ENCODE measurements at regions of chr17 and their contacts with region 1.

Region 1: DNA sequence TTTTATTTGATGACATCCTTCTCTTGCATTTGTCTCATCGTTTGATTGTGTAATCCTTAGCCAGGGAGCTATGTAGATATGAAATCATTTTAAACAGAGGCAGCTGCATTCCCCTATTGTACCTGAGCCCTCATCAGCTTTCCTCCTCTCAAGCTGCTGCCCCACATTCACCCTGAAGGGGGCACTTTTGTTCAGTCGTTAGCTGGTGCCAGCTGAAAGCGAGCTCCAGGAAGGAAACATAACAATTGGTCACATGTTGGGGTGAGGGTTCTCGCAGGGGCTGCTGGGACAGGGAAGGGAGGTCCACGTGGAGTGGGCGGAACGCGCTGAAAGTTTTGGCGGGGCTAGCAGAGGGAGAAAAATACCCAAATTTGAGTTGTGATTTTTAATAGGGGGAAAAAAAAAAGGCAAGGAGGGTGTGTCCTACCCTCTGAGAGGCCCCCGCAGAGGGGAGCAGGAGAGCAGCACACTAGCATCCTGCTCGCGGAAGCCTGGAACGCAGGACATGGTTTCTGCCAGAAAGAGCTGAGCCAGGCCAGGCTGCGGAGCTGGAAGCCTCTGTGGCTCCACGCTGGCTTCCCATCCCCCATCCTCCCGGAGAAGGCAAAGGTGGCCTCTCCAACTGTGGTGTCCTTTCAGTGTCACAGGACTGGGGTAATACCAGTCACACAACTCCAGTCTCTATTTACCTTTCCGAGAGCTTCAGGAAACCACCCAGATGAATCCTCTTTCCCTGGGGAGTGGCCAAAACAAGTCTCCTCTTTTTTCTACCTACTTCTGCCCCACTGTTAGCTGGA is 8.5 kb upstream of the MSL1 start:
- DNase-seq: peak; percentile 94
- ATAC-seq: peak; percentile 86
- H3K4me3 ChIP-seq: peak overlapping the region in 4 of 5 experiments; percentile 36 to 62 (median 58)
- H3K4me3 Mint-ChIP-seq: peak overlapping the region; percentile 92
- H3K27ac ChIP-seq: peak overlapping the region; percentile 28 to 40
- H3K27ac Mint-ChIP-seq: peak overlapping the region; percentile 89
- H3K4me1 ChIP-seq: peaks cover 34 to 41% of the 10 kb centered on the region in 2 donors
- H3K4me1 Mint-ChIP-seq: peaks cover 43% of the 10 kb centered on the region
- H3K27me3 ChIP-seq: no peaks in the 10 kb centered on the region
- H3K27me3 Mint-ChIP-seq: no peaks in the 10 kb centered on the region
- CTCF ChIP-seq: peak; percentile 84

Region 2: DNA sequence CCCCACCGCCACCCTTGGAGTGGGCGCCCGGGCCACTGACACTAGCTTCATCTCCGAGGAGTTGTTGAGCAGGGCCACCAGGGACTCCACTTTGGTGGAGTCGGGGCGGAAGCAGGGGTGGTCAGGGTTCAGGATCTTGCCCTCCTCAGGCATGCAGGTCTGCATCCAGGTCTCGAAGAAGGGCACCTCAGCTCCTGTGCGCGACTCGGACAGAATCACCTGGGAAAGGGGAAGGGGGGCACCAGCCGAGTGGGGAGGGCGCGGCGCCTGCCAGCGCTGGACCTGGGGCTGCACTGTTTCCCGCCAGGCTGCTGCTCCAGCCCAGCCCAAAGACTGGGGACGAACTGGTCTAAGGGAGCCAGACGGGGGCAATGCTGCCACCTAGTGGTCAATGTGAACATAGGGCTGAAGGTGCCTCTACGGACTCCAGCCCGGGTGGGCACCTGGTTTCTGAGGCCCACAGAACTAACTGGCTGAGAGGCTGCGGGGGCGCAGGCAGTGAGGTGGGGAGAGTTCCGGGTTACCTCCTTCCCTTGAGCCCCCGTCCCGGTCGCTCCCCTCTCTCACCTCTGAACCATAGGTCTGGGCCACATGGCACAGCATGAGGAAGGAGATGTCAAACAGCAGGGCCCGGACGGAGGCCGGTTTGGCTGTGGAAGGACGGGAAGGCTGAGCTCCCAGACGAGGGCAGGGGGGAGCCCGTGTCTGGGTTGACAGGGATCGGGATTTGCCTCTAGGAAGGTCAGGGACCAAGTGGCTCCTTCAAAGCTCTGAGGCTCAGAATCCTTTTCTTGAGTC is 86.3 kb before region 1 on chr17:
- CTCF ChIA-PET with region 1: interaction called, 22 read pairs
- POLR2A ChIA-PET with region 1: no interaction called
- intact Hi-C with region 1: no loop called
- DNase-seq: peak; percentile 85
- ATAC-seq: peak; percentile 92
- H3K4me3 ChIP-seq: no peak overlapping the region
- H3K4me3 Mint-ChIP-seq: no peak overlapping the region
- H3K27ac ChIP-seq: no peak overlapping the region
- H3K27ac Mint-ChIP-seq: no peak overlapping the region
- H3K4me1 ChIP-seq: peaks cover 0 to 5% of the 10 kb centered on the region in 2 donors
- H3K4me1 Mint-ChIP-seq: peaks cover 4% of the 10 kb centered on the region
- H3K27me3 ChIP-seq: no peaks in the 10 kb centered on the region
- H3K27me3 Mint-ChIP-seq: no peaks in the 10 kb centered on the region
- CTCF ChIP-seq: peak; percentile 94

Region 3: GRCh38 chr17:40075201-40075941 is 37.9 kb before region 1 on chr17:
- CTCF ChIA-PET with region 1: interaction called, 128 read pairs
- POLR2A ChIA-PET with region 1: no interaction called
- intact Hi-C with region 1: loop called (anchors 5 kb)
- DNase-seq: peak; percentile 82
- ATAC-seq: peak; percentile 93
- H3K4me3 ChIP-seq: no peak overlapping the region
- H3K4me3 Mint-ChIP-seq: no peak overlapping the region
- H3K27ac ChIP-seq: no peak overlapping the region
- H3K27ac Mint-ChIP-seq: peak overlapping the region; percentile 46
- H3K4me1 ChIP-seq: peaks cover 28 to 31% of the 10 kb centered on the region in 2 donors
- H3K4me1 Mint-ChIP-seq: peaks cover 40% of the 10 kb centered on the region
- H3K27me3 ChIP-seq: no peaks in the 10 kb centered on the region
- H3K27me3 Mint-ChIP-seq: no peaks in the 10 kb centered on the region
- CTCF ChIP-seq: peak; percentile 88

Region 4: GRCh38 chr17:40139566-40140058 is 26.3 kb after region 1 on chr17:
- CTCF ChIA-PET with region 1: interaction called, 26 read pairs
- POLR2A ChIA-PET with region 1: interaction called, 20 read pairs
- intact Hi-C with region 1: loop called (anchors 1 kb)
- DNase-seq: no peak
- ATAC-seq: peak; percentile 1
- H3K4me3 ChIP-seq: peak overlapping the region; percentile 74 to 93 (median 84)
- H3K4me3 Mint-ChIP-seq: peak overlapping the region; percentile 94
- H3K27ac ChIP-seq: peak overlapping the region; percentile 94 to 95
- H3K27ac Mint-ChIP-seq: peak overlapping the region; percentile 98
- H3K4me1 ChIP-seq: peaks cover 19 to 24% of the 10 kb centered on the region in 2 donors
- H3K4me1 Mint-ChIP-seq: peaks cover 23% of the 10 kb centered on the region
- H3K27me3 ChIP-seq: no peaks in the 10 kb centered on the region
- H3K27me3 Mint-ChIP-seq: no peaks in the 10 kb centered on the region
- CTCF ChIP-seq: no peak

Region 5: DNA sequence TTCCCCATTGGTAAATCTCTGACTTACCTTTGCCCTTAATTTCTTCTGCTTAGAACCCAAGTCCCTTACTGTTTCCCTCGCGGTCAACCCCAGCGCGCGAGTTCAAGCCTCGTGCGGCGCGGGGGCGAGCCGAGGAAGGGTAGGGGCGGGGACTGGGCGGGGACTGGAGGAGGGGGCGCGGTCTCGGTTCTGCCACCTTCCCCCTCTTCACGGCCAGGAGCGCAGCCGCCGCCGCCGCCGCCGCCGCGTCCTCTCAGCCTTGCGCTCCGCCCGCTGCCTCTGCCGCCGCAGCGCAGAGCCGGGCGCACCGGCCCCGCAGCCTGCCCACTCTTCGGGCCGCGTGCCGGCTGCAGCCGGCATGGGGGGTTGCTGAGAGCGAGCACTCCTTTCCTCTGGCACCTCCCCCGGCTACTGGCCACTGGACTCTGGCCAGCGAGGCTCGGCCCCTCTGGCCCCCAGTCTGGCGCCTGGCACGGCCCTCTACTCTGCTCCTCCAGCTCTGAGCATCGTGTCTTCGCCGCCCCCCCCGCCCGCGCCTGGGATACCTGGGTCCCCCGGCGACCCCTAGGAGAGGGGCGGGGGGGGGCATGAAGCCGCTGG is 64.1 kb after region 1 on chr17 and contains the start of gene RAPGEFL1:
- CTCF ChIA-PET with region 1: interaction called, 30 read pairs
- POLR2A ChIA-PET with region 1: no interaction called
- intact Hi-C with region 1: loop called (anchors 1 kb)
- DNase-seq: peak; percentile 88
- ATAC-seq: peak; percentile 99
- H3K4me3 ChIP-seq: peak within 1 kb of the TSS in 4 of 5 experiments; percentile 42 to 66 (median 59)
- H3K4me3 Mint-ChIP-seq: peak within 1 kb of the TSS; percentile 77
- H3K27ac ChIP-seq: no peak within 1 kb of the TSS
- H3K27ac Mint-ChIP-seq: no peak within 1 kb of the TSS
- H3K4me1 ChIP-seq: peaks cover 17% of the 10 kb centered on the region in 2 donors
- H3K4me1 Mint-ChIP-seq: peaks cover 11% of the 10 kb centered on the region
- H3K27me3 ChIP-seq: peaks cover 0 to 7% (median 2%) of the 10 kb centered on the region in 4 experiments
- H3K27me3 Mint-ChIP-seq: no peaks in the 10 kb centered on the region
- CTCF ChIP-seq: no peak
- total RNA-seq, gene RAPGEFL1: 5.4 and 5.6 TPM in 2 replicates

Region 6: GRCh38 chr17:40230670-40231069 is 117.4 kb after region 1 on chr17:
- CTCF ChIA-PET with region 1: interaction called, 3 read pairs
- POLR2A ChIA-PET with region 1: interaction called, 10 read pairs
- intact Hi-C with region 1: no loop called
- DNase-seq: no peak
- ATAC-seq: no peak
- H3K4me3 ChIP-seq: no peak overlapping the region
- H3K4me3 Mint-ChIP-seq: no peak overlapping the region
- H3K27ac ChIP-seq: no peak overlapping the region
- H3K27ac Mint-ChIP-seq: no peak overlapping the region
- H3K4me1 ChIP-seq: no peaks in the 10 kb centered on the region
- H3K4me1 Mint-ChIP-seq: peaks cover 18% of the 10 kb centered on the region
- H3K27me3 ChIP-seq: no peaks in the 10 kb centered on the region
- H3K27me3 Mint-ChIP-seq: no peaks in the 10 kb centered on the region
- CTCF ChIP-seq: no peak

Measured in B cell (primary cell).